ENCODE measurements at regions of chr11 and their contacts with region 1.

Region 1: DNA sequence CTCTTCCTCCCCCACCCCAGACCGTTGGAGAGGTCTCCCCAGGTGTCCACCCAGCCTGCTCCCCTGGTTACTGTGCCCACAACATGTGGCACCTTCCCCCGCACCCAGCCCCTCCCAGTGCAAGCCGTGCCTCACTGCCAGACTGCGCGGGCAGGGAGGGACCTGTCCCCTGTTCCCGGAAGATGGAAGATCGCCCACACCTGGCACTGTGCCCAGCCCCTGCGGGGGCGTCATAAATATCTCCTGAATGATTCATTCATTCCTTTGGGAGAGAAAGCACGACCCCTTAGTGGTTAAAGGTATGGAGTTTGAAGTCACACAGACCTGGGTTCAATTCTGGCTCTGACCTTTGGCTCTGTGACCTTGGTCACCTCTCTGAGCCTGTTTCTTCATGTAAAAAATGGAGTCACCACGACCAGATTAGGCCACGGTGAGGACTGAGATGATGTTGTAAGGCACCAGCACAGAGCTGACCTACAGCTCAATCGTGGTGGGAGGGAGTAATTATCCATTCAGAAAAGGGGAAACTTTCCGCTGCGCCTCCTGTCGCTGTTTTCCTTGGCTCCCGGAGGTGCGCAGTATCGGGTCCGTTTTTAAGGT is 506 bp upstream of the SYT12 start:
- DNase-seq: peak; percentile 75
- ATAC-seq: peak; percentile 77
- H3K4me3 ChIP-seq: peak overlapping the region; percentile 37 to 55
- H3K27ac ChIP-seq: peak overlapping the region; percentile 70
- H3K4me1 ChIP-seq: peaks cover 40 to 49% of the 10 kb centered on the region in 2 experiments
- H3K27me3 ChIP-seq: no peaks in the 10 kb centered on the region
- CTCF ChIP-seq: no peak
- POLR2A ChIP-seq: no peak
- RAD21 ChIP-seq: 0 out of 2 replicates have a peak, but pooled peaks have one; percentile 24

Region 2: GRCh38 chr11:66408488-66409214 is 613.8 kb before region 1 on chr11:
- CTCF ChIA-PET with region 1: no interaction called
- POLR2A ChIA-PET with region 1: no interaction called
- RAD21 ChIA-PET with region 1: no interaction called
- intact Hi-C with region 1: loop called (anchors 5 kb)
- DNase-seq: peak; percentile 62
- ATAC-seq: peak; percentile 92
- H3K4me3 ChIP-seq: peak overlapping the region; percentile 26 to 45; a peak in 3 of 4 replicates
- H3K27ac ChIP-seq: no peak overlapping the region
- H3K4me1 ChIP-seq: peaks cover 0 to 3% of the 10 kb centered on the region in 2 experiments; a peak in 1 of 4 replicates
- H3K27me3 ChIP-seq: peaks cover 16% of the 10 kb centered on the region; the same call in 1 of the 2 replicates
- CTCF ChIP-seq: peak; percentile 99 to 100 (median 100)
- POLR2A ChIP-seq: no peak
- RAD21 ChIP-seq: peak; percentile 99

Region 3: DNA sequence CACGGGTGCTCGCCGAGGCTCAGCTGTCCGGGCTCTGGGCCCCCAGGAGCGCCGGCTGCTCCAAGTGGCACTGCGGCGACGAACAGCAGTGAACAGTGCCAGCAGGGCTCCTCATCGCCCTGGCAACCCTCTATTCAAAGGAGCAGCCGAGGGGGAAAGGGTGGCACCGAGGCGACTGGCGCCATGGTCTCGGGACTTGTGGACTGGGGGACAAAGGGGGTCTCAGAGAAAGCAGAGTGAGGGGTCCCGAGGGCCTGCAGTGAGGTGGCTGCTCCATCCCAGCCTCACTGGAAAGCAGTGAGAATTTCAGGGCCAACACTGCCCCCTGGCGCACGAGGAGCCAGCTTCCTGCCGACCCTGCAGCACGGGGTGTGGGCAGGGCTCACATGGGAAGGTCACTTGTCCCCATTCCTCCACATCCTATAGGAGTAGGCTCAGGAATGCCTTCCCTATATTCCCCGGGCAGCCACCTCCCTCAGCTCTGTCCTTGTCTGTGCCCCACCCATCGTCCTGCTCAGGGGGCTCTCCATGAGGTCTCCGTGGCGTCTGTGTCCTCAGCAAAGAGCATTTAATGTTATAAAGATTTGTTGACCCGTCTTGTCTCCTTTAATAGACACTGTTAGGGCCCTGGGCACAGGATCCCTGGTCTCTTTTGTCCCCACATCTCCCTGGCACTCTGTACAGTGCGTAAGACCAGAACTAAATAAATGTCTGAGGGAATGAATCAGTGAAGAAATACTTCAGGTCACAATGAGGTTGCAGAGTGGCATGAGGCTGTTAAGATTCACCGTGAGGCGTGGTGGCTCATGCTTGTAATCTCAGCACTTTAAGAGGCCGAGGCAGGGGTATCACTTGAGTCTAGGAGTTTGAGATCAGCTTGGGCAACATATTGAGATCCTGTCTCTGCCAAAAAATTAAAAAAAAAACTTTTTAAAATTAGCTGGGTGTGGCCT is 139.1 kb before region 1 on chr11:
- CTCF ChIA-PET with region 1: interaction called, 4 read pairs
- POLR2A ChIA-PET with region 1: interaction called, 3 read pairs
- RAD21 ChIA-PET with region 1: interaction called in 1 of 2 experiments, 4 read pairs
- intact Hi-C with region 1: loop called (anchors 5 kb)
- DNase-seq: peak; percentile 68
- ATAC-seq: peak; percentile 81
- H3K4me3 ChIP-seq: peak overlapping the region; percentile 31 to 51
- H3K27ac ChIP-seq: peak overlapping the region; percentile 76
- H3K4me1 ChIP-seq: peaks cover 83% of the 10 kb centered on the region in 2 experiments
- H3K27me3 ChIP-seq: no peaks in the 10 kb centered on the region
- CTCF ChIP-seq: peak in 2 of 3 experiments; percentile 80 to 85; a peak in 4 of 6 replicates
- POLR2A ChIP-seq: no peak
- RAD21 ChIP-seq: no peak

Region 4: DNA sequence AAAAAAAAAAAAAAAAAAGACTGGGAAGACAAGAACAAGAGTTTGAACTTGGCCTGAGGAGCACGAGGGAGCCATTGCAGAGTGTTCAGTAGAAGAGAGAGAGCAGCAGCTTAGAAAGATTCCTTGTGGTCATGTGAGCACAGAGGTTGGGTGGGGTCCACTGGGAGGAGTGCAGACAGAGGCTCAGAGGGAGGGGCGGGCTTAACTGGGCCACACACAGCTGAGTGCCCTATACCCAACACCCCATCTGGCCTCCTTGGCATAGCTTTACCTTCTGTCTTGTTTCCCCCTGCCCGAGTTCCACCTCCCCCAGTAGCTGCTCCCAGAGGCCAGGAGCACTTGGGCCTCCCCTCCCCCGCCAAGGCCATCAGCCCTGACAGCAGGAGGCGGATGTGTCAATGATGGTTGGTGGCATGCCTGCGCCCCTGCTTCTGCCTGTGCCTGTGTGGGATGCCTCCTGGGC is 35.2 kb before region 1 on chr11:
- CTCF ChIA-PET with region 1: interaction called, 6 read pairs
- POLR2A ChIA-PET with region 1: no interaction called
- RAD21 ChIA-PET with region 1: no interaction called
- intact Hi-C with region 1: loop called (anchors 5 kb)
- DNase-seq: no peak
- ATAC-seq: 0 out of 2 replicates have a peak, but pooled peaks have one; percentile 16
- H3K4me3 ChIP-seq: no peak overlapping the region
- H3K27ac ChIP-seq: no peak overlapping the region; the same call in 1 of the 2 replicates
- H3K4me1 ChIP-seq: peaks cover 53 to 58% of the 10 kb centered on the region in 2 experiments
- H3K27me3 ChIP-seq: no peaks in the 10 kb centered on the region
- CTCF ChIP-seq: no peak
- POLR2A ChIP-seq: no peak
- RAD21 ChIP-seq: no peak

Measured in HCT116 (cell line).